Calu3 (cell line): ENCODE measurements at regions of chr11 and their contacts with region 1.

Region 1: DNA sequence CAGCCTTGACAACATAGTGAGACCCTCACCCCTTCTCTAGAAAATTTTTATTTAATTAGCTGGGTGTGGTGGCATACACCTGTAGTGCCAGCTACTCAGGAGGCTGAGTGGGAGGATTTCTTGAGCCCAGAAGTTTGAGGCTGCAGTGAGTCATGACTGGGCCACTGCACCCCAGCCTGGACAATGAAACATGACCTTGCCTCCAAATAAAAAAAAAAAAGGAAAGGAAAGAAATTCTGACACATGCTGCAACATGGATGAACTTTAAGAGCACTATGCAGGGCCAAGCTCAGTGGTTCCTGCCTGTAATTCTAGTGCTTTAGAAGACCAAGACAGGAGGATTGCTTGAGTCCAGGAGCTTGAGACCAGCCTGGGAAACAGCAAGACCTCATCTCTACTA is 8.8 kb downstream of the SLC43A3 start:
- DNase-seq: no peak
- H3K4me3 Mint-ChIP-seq: no peak overlapping the region
- H3K27ac Mint-ChIP-seq: no peak overlapping the region
- H3K4me1 Mint-ChIP-seq: peaks cover 16% of the 10 kb centered on the region
- H3K27me3 Mint-ChIP-seq: no peaks in the 10 kb centered on the region
- CTCF ChIP-seq: no peak

Region 2: DNA sequence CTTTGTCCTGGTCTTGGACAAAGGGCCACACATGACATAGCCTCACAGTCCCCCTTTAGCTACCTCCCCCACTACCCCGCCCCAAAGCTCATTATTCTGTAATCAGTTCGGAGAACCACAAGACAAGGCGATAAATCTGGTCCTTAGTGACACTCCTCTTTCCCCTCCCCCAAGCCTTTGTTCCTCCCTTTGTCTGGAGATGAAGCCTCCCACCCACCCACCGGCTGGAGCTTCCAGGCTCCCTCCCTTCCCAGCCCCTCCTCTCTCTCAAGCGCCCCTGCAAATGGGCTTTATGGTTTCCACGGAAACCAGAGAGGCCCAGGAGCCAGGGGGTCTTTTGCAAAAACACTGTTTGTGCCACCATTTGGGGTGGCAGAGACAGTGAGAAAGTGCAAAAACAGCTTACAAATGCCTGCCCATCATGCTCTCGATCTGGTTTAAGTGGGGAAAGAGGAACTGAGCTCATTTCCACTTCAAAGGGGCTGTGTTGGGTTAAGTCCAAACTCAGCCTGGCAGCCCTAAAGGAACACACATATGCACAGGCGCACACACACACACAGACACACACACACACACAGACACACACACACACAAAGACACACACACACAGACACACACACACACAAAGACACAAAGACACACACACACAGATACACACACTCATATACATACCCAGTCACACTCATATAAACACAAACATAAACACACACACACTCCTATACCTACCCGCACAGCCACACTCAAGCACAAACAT is 204.6 kb before region 1 on chr11:
- CTCF ChIA-PET with region 1: no interaction called
- intact Hi-C with region 1: no loop called
- DNase-seq: no peak
- H3K4me3 Mint-ChIP-seq: no peak overlapping the region
- H3K27ac Mint-ChIP-seq: no peak overlapping the region
- H3K4me1 Mint-ChIP-seq: no peaks in the 10 kb centered on the region
- H3K27me3 Mint-ChIP-seq: no peaks in the 10 kb centered on the region
- CTCF ChIP-seq: no peak

Region 3: GRCh38 chr11:57406337-57406904 is 11.7 kb before region 1 on chr11:
- CTCF ChIA-PET with region 1: no interaction called
- intact Hi-C with region 1: no loop called
- DNase-seq: no peak
- H3K4me3 Mint-ChIP-seq: no peak overlapping the region
- H3K27ac Mint-ChIP-seq: peak overlapping the region; percentile 66
- H3K4me1 Mint-ChIP-seq: peaks cover 20% of the 10 kb centered on the region
- H3K27me3 Mint-ChIP-seq: no peaks in the 10 kb centered on the region
- CTCF ChIP-seq: no peak

Region 4: DNA sequence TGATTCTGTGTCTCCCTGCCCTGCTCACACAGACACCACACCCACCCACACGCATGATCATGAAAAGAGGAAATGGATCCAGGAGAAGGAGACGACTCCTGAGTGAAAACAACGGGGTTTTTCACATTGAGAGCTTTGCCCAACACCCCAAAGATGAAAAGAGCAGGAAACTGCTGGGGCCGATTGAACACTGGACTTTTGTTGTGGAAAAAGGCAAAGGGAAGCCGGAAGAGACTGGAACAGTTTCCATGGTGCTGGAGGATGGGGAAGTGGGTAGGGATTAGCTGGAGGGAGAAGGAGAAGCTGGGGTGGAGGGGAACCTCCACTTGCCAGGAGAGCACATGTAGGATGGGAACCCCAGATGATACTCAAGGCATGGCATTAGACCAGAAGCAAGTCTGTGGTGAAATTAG is 14.0 kb after region 1 on chr11:
- CTCF ChIA-PET with region 1: interaction called, 13 read pairs
- intact Hi-C with region 1: no loop called
- DNase-seq: no peak
- H3K4me3 Mint-ChIP-seq: no peak overlapping the region
- H3K27ac Mint-ChIP-seq: no peak overlapping the region
- H3K4me1 Mint-ChIP-seq: peaks cover 29% of the 10 kb centered on the region
- H3K27me3 Mint-ChIP-seq: no peaks in the 10 kb centered on the region
- CTCF ChIP-seq: no peak